CD4-positive, alpha-beta memory T cell (primary cell): ENCODE measurements at regions of chr5 and their contacts with region 1.

Region 1: GRCh38 chr5:132526290-132526973 is 16.9 kb downstream of the IL5 start:
- DNase-seq: peak; percentile 43 to 63 (median 49)
- H3K4me3 ChIP-seq: no peak overlapping the region
- H3K4me3 Mint-ChIP-seq: peak overlapping the region in 2 of 8 donors; percentile 57 to 60
- H3K27ac ChIP-seq: no peak overlapping the region
- H3K27ac Mint-ChIP-seq: no peak overlapping the region
- H3K4me1 ChIP-seq: peaks cover 16% of the 10 kb centered on the region
- H3K4me1 Mint-ChIP-seq: peaks cover 8 to 15% (median 13%) of the 10 kb centered on the region in 4 donors
- H3K27me3 ChIP-seq: no peaks in the 10 kb centered on the region
- H3K27me3 Mint-ChIP-seq: peaks cover 0 to 1% of the 10 kb centered on the region in 2 donors

Region 2: DNA sequence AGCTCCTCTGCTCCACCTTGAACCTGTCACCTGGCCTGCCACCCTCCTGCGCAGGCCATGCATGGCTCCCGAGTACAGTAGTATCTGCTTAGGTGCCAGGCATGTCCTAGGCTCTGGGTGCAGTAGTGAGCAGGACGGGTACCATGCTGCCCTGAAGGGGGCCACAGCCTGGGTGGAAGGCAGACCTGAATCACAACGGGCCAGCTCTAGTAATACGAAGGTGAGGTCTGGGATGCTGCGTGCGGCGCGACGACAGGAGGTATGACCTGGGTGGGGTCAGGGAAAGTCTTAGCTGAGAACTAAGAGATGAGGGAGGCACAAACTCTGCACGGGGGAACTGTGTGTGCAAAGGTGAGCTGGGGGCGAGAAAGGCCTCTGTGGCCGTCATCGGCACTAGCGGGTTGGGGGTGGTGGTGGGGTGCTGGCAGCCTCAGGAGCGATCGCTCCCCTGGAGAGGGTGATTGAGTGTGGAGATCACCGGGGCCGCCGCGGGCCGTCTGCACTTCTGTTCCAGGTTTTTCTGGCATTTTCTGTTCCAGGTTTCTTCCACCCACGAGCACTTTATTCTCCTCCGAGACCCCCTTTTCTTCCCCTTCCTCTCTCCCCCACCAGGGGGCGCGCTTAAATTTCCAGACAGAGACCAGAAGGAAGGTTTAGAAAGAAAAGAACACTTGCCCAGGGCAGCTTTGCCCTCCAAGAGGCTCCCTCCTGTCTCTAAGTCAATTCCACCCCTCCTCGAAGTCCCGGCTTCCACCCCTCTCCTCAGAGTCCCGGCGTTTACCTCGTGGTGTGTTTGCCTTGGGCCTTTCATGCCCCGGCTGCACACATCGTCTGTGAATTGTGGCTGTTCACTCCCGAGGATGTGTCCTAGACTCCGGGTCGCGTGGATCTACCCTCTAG is 253.9 kb before region 1 on chr5:
- CTCF ChIA-PET with region 1: no interaction called
- POLR2A ChIA-PET with region 1: no interaction called
- intact Hi-C with region 1: no loop called
- DNase-seq: peak; percentile 32 to 54 (median 47)
- H3K4me3 ChIP-seq: no peak overlapping the region
- H3K4me3 Mint-ChIP-seq: peak overlapping the region in 4 of 8 donors; percentile 6 to 61 (median 41)
- H3K27ac ChIP-seq: no peak overlapping the region
- H3K27ac Mint-ChIP-seq: peak overlapping the region in 1 of 7 donors; percentile 12
- H3K4me1 ChIP-seq: no peaks in the 10 kb centered on the region
- H3K4me1 Mint-ChIP-seq: peaks cover 0 to 22% (median 12%) of the 10 kb centered on the region in 4 donors
- H3K27me3 ChIP-seq: no peaks in the 10 kb centered on the region
- H3K27me3 Mint-ChIP-seq: peaks cover 6 to 16% of the 10 kb centered on the region in 2 donors

Region 3: GRCh38 chr5:132510076-132510475 is 16.4 kb before region 1 on chr5:
- CTCF ChIA-PET with region 1: interaction called, 13 read pairs
- POLR2A ChIA-PET with region 1: no interaction called
- intact Hi-C with region 1: no loop called
- DNase-seq: no peak
- H3K4me3 ChIP-seq: no peak overlapping the region
- H3K4me3 Mint-ChIP-seq: no peak overlapping the region
- H3K27ac ChIP-seq: no peak overlapping the region
- H3K27ac Mint-ChIP-seq: no peak overlapping the region
- H3K4me1 ChIP-seq: no peaks in the 10 kb centered on the region
- H3K4me1 Mint-ChIP-seq: no peaks in the 10 kb centered on the region
- H3K27me3 ChIP-seq: no peaks in the 10 kb centered on the region
- H3K27me3 Mint-ChIP-seq: peaks cover 5 to 12% of the 10 kb centered on the region in 2 donors

Region 4: DNA sequence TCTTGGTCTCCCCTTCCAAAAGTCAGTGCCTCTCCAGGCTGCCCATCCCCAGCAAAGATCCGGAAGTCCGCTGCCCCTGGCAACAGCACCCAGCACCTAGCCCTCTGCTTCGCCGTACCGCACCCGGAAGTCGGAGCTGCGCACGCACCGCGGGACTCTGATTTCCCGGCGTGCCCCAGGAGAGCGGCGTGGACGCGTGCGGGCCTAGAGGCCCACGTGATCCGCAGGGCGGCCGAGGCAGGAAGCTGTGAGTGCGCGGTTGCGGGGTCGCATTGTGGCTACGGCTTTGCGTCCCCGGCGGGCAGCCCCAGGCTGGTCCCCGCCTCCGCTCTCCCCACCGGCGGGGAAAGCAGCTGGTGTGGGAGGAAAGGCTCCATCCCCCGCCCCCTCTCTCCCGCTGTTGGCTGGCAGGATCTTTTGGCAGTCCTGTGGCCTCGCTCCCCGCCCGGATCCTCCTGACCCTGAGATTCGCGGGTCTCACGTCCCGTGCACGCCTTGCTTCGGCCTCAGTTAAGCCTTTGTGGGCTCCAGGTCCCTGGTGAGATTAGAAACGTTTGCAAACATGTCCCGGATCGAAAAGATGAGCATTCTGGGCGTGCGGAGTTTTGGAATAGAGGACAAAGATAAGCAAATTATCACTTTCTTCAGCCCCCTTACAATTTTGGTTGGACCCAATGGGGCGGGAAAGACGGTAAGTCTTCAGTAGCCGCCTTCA is 30.5 kb after region 1 on chr5 and contains the start of gene RAD50:
- CTCF ChIA-PET with region 1: interaction called, 10 read pairs
- POLR2A ChIA-PET with region 1: interaction called, 3 read pairs
- intact Hi-C with region 1: loop called (anchors 1 kb)
- DNase-seq: peak; percentile 88 to 92 (median 90)
- H3K4me3 ChIP-seq: peak within 1 kb of the TSS; percentile 43 to 64
- H3K4me3 Mint-ChIP-seq: peak within 1 kb of the TSS; percentile 93 to 99 (median 96)
- H3K27ac ChIP-seq: peak within 1 kb of the TSS; percentile 69
- H3K27ac Mint-ChIP-seq: peak within 1 kb of the TSS; percentile 94 to 98 (median 96)
- H3K4me1 ChIP-seq: peaks cover 46% of the 10 kb centered on the region
- H3K4me1 Mint-ChIP-seq: peaks cover 18 to 35% (median 26%) of the 10 kb centered on the region in 4 donors
- H3K27me3 ChIP-seq: no peaks in the 10 kb centered on the region
- H3K27me3 Mint-ChIP-seq: no peaks in the 10 kb centered on the region
- total RNA-seq, gene RAD50: 33.3 to 35.0 TPM

Region 5: GRCh38 chr5:132591145-132591544 is 64.7 kb after region 1 on chr5:
- CTCF ChIA-PET with region 1: no interaction called
- POLR2A ChIA-PET with region 1: no interaction called
- intact Hi-C with region 1: no loop called
- DNase-seq: no peak
- H3K4me3 ChIP-seq: no peak overlapping the region
- H3K4me3 Mint-ChIP-seq: no peak overlapping the region
- H3K27ac ChIP-seq: no peak overlapping the region
- H3K27ac Mint-ChIP-seq: no peak overlapping the region
- H3K4me1 ChIP-seq: no peaks in the 10 kb centered on the region
- H3K4me1 Mint-ChIP-seq: peaks cover 0 to 7% (median 0%) of the 10 kb centered on the region in 4 donors
- H3K27me3 ChIP-seq: no peaks in the 10 kb centered on the region
- H3K27me3 Mint-ChIP-seq: no peaks in the 10 kb centered on the region

Region 6: DNA sequence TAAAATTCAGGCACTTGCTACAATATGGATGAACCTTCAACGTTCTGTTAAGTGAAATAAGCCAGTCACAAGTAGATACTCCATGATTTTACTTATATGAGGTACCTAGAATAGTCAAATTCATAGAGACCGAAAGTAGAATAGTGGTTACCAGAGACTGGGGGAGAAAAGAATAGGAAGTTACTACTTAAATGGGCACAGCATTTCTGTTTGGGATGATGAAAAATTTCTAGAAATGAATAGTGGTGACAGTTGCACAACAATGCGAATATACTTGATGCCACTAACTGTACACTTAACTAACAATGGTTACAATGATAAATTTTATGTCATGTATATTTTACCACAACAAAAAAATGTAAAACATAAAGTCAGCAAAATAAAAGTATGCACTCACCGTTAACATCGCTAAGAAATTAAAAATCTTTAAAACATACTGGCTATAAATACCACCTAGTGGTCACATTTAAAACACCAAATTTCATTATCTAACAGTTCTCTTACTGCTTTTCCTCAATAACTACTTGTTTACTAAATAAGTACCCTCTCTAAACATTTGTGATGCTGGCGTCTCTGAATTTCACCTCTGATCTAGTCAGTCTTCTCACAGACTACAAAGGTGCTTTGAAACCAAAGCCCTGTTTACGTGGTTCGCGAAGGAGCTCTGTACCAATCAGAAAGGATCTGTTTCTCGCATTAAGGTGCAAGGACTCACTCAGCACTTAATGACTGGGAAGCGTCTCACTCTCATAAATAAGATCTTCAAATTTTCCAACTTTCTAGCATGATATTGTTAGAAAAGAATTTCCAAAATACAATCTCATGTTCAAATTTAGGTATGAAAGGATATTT is 188.2 kb after region 1 on chr5:
- CTCF ChIA-PET with region 1: interaction called, 12 read pairs
- POLR2A ChIA-PET with region 1: no interaction called
- intact Hi-C with region 1: loop called (anchors 1 kb)
- DNase-seq: peak in 4 of 5 donors; percentile 16 to 27 (median 22)
- H3K4me3 ChIP-seq: no peak overlapping the region
- H3K4me3 Mint-ChIP-seq: peak overlapping the region in 3 of 8 donors; percentile 43 to 63 (median 53)
- H3K27ac ChIP-seq: no peak overlapping the region
- H3K27ac Mint-ChIP-seq: no peak overlapping the region
- H3K4me1 ChIP-seq: no peaks in the 10 kb centered on the region
- H3K4me1 Mint-ChIP-seq: peaks cover 7 to 10% (median 8%) of the 10 kb centered on the region in 4 donors
- H3K27me3 ChIP-seq: no peaks in the 10 kb centered on the region
- H3K27me3 Mint-ChIP-seq: no peaks in the 10 kb centered on the region

Region 7: GRCh38 chr5:132883261-132883834 is 356.9 kb after region 1 on chr5:
- CTCF ChIA-PET with region 1: interaction called, 5 read pairs
- POLR2A ChIA-PET with region 1: no interaction called
- intact Hi-C with region 1: loop called (anchors 10 kb)
- DNase-seq: peak in 4 of 5 donors; percentile 24 to 33 (median 28)
- H3K4me3 ChIP-seq: no peak overlapping the region
- H3K4me3 Mint-ChIP-seq: no peak overlapping the region
- H3K27ac ChIP-seq: no peak overlapping the region
- H3K27ac Mint-ChIP-seq: peak overlapping the region in 5 of 7 donors; percentile 36 to 84 (median 76)
- H3K4me1 ChIP-seq: no peaks in the 10 kb centered on the region
- H3K4me1 Mint-ChIP-seq: peaks cover 0 to 3% (median 0%) of the 10 kb centered on the region in 4 donors
- H3K27me3 ChIP-seq: no peaks in the 10 kb centered on the region
- H3K27me3 Mint-ChIP-seq: no peaks in the 10 kb centered on the region